H1 (cell line): ENCODE measurements at regions of chr10 and their contacts with region 1.

Region 1: GRCh38 chr10:110408203-110408751 is 89.4 kb upstream of the DUSP5 start:
- DNase-seq: no peak
- H3K4me3 ChIP-seq: no peak overlapping the region
- H3K27ac ChIP-seq: no peak overlapping the region
- H3K4me1 ChIP-seq: peaks cover 0 to 7% (median 3%) of the 10 kb centered on the region in 4 experiments; a peak in 6 of 7 replicates
- H3K27me3 ChIP-seq: no peaks in the 10 kb centered on the region
- CTCF ChIP-seq: no peak
- EP300 ChIP-seq: no peak
- POLR2A ChIP-seq: no peak
- RAD21 ChIP-seq: no peak

Region 2: DNA sequence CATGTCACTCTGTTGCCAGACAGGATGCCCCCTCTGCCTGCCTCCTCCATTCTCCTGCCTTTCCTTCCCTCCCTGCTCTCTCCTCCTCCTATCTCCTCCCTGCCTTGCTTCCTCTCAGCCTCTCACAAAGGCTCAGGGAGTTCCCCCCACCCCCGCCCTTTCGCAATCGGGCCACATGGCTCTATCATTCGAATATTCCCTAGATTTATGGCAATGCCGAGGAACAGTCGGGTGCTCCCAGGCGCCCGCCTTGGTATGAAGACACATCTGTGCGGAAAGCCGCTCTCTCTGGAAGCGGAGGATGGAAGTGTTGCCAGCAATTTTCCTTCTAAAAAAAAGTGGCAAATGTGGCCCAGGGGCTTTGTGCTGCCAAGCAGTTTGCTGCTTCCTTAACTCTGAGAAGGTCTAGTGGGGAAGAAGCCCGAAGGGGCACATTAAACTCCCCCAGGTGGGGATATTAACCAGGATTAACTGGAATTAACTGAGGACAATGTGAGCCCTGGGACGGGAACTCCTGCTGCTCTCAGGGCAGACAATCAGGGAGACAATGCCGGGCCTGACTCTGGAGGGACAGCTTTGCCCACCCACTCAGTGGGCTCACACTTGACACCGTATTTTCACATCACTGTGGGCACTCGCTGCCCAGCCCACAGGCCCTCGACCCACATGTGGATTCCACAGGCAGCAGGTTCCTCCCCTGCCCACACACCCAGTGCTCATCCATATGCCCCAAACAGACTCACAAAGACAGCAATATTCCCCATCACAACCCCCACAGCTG is 15.2 kb before region 1 on chr10:
- CTCF ChIA-PET with region 1: interaction called, 20 read pairs
- POLR2A ChIA-PET with region 1: no interaction called
- DNase-seq: no peak
- H3K4me3 ChIP-seq: no peak overlapping the region
- H3K27ac ChIP-seq: no peak overlapping the region
- H3K4me1 ChIP-seq: peaks cover 4 to 12% (median 8%) of the 10 kb centered on the region in 4 experiments
- H3K27me3 ChIP-seq: 0 out of 7 replicates have a peak, but pooled peaks cover 0 to 2% (median 0%) of the 10 kb centered on the region in 4 experiments
- CTCF ChIP-seq: no peak
- EP300 ChIP-seq: no peak
- POLR2A ChIP-seq: no peak
- RAD21 ChIP-seq: no peak

Region 3: DNA sequence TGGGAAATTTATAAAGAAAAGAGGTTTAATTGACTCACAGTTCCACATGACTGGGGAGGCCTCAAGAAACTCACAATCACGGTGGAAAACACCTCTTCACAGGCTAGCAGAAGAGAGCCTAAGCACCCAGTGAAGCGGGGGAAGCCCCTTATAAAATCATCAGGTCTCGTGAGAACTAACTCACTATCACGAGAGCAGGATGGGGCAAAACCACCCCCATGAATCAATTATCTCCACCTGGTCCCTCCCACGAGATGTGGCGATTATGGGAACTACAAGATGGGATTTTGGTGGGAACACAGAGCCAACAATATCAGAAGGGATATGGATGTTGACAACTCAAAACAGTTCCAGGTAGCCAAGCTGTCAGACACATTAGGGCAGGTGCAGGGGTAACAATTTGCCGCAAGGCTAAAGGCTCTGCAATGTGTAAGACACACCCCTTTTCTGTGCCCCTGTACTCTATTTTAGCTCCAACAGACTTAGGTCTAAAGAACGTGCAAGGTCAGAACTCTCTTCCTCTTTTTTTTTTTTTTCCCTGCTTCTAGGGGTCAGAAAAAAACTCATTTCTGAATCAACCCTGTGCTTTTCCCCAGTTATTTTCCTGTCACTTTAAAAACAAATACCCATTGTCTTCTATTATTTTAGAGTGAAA is 205.2 kb after region 1 on chr10:
- CTCF ChIA-PET with region 1: no interaction called
- POLR2A ChIA-PET with region 1: no interaction called
- DNase-seq: no peak
- H3K4me3 ChIP-seq: no peak overlapping the region
- H3K27ac ChIP-seq: no peak overlapping the region
- H3K4me1 ChIP-seq: peaks cover 5 to 9% (median 8%) of the 10 kb centered on the region in 4 experiments
- H3K27me3 ChIP-seq: no peaks in the 10 kb centered on the region
- CTCF ChIP-seq: no peak
- EP300 ChIP-seq: no peak
- POLR2A ChIP-seq: no peak
- RAD21 ChIP-seq: no peak